Left cardiac atrium (tissue), 4 donors: ENCODE measurements at regions of chr19 and their contacts with region 1.

Region 1: GRCh38 chr19:49937750-49938381 is 8.6 kb upstream of the NUP62 start:
- DNase-seq: peak; percentile 82
- ATAC-seq: peak; percentile 92

Region 2: DNA sequence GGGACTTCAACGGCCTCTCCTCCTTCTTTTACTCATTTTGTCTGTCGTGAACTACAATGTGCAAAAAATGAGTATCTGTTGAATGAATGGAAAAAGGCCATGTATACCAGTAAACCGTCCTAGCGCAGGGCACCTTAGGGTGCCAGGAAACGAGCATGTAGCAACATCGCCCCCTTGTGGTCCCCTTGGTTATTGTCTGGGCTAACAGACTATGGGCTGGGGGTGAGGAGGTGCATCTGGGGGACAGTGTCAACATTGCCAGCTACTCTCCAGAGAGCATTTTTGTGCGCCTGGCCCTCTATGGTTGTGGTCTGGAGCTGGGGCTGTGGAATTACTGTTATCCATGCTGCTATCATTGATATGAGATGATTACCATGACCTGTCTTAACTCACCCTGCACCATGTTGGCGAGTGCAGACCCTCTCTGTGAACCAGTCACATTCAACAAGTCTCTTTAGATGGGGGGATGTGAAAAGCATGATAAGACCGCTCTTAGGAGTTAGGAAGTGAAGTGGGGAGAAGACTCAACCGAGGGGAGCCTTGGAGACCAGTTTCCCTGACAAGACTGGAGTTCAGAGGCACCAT is 45.9 kb after region 1 on chr19:
- intact Hi-C with region 1: loop called (anchors 1 to 2 kb)
- DNase-seq: peak; percentile 60
- ATAC-seq: peak; percentile 56 to 69

Region 3: GRCh38 chr19:50025024-50025789 is 87.3 kb after region 1 on chr19 and contains the start of gene VRK3:
- intact Hi-C with region 1: no loop called
- DNase-seq: peak; percentile 99
- ATAC-seq: peak; percentile 95 to 98
- total RNA-seq, gene VRK3: 18.5 to 23.5 TPM